Psoas muscle (tissue), 8 donors: ENCODE measurements at regions of chr19 and their contacts with region 1.

Region 1: GRCh38 chr19:4229179-4229931 is at the start of gene EBI3:
- DNase-seq: peak in 1 of 2 donors; percentile 33
- ATAC-seq: peak in 1 of 4 donors; percentile 36
- H3K4me3 ChIP-seq: peak within 1 kb of the TSS; percentile 22
- H3K27ac ChIP-seq: no peak within 1 kb of the TSS
- H3K4me1 ChIP-seq: no peaks in the 10 kb centered on the region
- H3K27me3 ChIP-seq: peaks cover 0 to 62% (median 15%) of the 10 kb centered on the region in 3 donors
- CTCF ChIP-seq: no peak
- total RNA-seq, gene EBI3: 0.48 to 0.64 (median 0.58) TPM

Region 2: GRCh38 chr19:3868770-3869456 is 360.4 kb before region 1 on chr19 and contains the start of gene ZFR2:
- intact Hi-C with region 1: loop called in 1 of 2 experiments (anchors 10 kb)
- DNase-seq: no peak
- ATAC-seq: no peak
- H3K4me3 ChIP-seq: no peak within 1 kb of the TSS
- H3K27ac ChIP-seq: no peak within 1 kb of the TSS
- H3K4me1 ChIP-seq: no peaks in the 10 kb centered on the region
- H3K27me3 ChIP-seq: peaks cover 0 to 61% (median 26%) of the 10 kb centered on the region in 3 donors
- CTCF ChIP-seq: no peak
- total RNA-seq, gene ZFR2: not detected